WTC11 (cell line): ENCODE measurements at regions of chr9 and their contacts with region 1.

Region 1: GRCh38 chr9:125558453-125559092 is 148.4 kb downstream of the MAPKAP1 start:
- DNase-seq: peak; percentile 64
- ATAC-seq: peak; percentile 83
- H3K4me3 Mint-ChIP-seq: no peak overlapping the region
- H3K27ac Mint-ChIP-seq: no peak overlapping the region
- H3K4me1 Mint-ChIP-seq: peaks cover 14% of the 10 kb centered on the region
- H3K27me3 Mint-ChIP-seq: no peaks in the 10 kb centered on the region
- CTCF ChIP-seq: 0 out of 2 replicates have a peak, but pooled peaks have one; percentile 23

Region 2: DNA sequence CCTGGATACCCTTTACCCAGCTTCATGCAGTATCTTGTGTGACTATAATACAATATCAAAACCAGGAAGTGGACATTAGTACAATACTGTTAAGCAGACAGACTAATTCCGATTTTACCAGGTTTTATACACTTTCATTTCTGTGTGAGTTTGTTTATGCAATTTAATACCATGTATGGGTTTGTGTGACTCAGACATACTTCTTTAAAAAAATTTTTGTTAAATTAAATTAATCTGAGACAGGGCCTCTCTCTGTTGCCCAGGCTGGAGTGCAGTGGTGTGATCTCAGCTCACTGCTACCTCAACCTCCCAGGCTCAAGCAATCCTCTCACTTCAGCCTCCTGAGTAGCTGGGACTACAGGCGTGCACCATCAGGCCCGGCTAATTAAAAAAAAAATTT is 140.2 kb before region 1 on chr9:
- CTCF ChIA-PET with region 1: no interaction called
- POLR2A ChIA-PET with region 1: no interaction called
- DNase-seq: no peak
- ATAC-seq: no peak
- H3K4me3 Mint-ChIP-seq: no peak overlapping the region
- H3K27ac Mint-ChIP-seq: no peak overlapping the region
- H3K4me1 Mint-ChIP-seq: no peaks in the 10 kb centered on the region
- H3K27me3 Mint-ChIP-seq: no peaks in the 10 kb centered on the region
- CTCF ChIP-seq: no peak

Region 3: GRCh38 chr9:125529589-125530515 is 28.7 kb before region 1 on chr9:
- CTCF ChIA-PET with region 1: interaction called, 10 read pairs
- POLR2A ChIA-PET with region 1: no interaction called
- DNase-seq: no peak
- ATAC-seq: peak; percentile 57
- H3K4me3 Mint-ChIP-seq: no peak overlapping the region
- H3K27ac Mint-ChIP-seq: peak overlapping the region; percentile 76
- H3K4me1 Mint-ChIP-seq: peaks cover 47% of the 10 kb centered on the region
- H3K27me3 Mint-ChIP-seq: no peaks in the 10 kb centered on the region
- CTCF ChIP-seq: no peak

Region 4: DNA sequence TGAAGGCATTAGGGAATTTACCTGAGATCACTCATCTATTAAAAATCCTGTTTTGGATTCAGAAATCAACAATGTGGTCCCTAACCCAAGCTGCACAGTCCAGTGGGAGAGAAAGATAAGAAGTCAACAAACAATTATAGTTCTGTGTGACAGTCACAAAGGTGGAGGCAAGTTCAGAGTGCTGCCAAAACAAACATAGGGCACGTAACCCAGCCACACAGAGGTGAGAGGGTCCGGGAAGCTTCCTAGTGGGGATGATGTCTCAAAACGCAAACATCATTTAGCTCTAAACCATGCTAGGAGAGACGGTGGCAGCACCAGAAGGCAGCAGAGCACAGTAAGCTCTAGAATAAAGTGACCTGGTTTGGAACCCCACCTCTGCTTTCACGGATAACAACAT is 10.4 kb before region 1 on chr9:
- CTCF ChIA-PET with region 1: interaction called, 13 read pairs
- POLR2A ChIA-PET with region 1: no interaction called
- DNase-seq: no peak
- ATAC-seq: no peak
- H3K4me3 Mint-ChIP-seq: no peak overlapping the region
- H3K27ac Mint-ChIP-seq: no peak overlapping the region
- H3K4me1 Mint-ChIP-seq: peaks cover 12% of the 10 kb centered on the region; the same call in 1 of the 2 replicates
- H3K27me3 Mint-ChIP-seq: no peaks in the 10 kb centered on the region
- CTCF ChIP-seq: no peak

Region 5: DNA sequence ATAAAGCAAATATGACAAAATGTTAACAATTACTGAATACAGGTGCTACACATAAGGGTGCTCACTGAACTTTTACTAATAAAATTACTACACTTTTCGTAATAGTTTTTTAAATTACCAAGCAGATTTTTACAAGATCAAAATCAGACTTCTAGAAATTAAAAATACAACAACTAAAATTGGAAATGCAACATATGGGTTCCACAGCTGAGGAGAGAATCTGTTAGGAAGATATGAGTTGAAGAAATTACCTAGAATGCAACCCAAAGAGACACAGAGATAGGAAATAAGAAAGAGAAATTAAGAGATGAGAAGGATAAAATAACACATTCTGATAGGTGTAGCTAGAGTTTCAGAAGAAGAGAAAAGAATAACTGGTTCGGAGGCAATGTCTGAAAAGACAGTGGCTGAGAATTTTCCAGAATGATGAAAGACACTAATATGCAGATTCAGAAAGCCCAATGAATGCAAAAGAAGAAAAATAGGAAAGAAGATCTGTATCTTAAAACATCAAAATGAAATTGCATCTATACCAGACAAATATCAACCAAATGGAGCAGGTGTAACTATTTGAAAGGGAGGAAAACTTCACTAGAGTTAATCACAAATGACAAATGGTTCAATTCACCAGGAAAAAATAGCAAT is 52.7 kb after region 1 on chr9:
- CTCF ChIA-PET with region 1: no interaction called
- POLR2A ChIA-PET with region 1: no interaction called
- DNase-seq: no peak
- ATAC-seq: no peak
- H3K4me3 Mint-ChIP-seq: no peak overlapping the region
- H3K27ac Mint-ChIP-seq: no peak overlapping the region
- H3K4me1 Mint-ChIP-seq: peaks cover 43% of the 10 kb centered on the region
- H3K27me3 Mint-ChIP-seq: no peaks in the 10 kb centered on the region
- CTCF ChIP-seq: no peak

Region 6: DNA sequence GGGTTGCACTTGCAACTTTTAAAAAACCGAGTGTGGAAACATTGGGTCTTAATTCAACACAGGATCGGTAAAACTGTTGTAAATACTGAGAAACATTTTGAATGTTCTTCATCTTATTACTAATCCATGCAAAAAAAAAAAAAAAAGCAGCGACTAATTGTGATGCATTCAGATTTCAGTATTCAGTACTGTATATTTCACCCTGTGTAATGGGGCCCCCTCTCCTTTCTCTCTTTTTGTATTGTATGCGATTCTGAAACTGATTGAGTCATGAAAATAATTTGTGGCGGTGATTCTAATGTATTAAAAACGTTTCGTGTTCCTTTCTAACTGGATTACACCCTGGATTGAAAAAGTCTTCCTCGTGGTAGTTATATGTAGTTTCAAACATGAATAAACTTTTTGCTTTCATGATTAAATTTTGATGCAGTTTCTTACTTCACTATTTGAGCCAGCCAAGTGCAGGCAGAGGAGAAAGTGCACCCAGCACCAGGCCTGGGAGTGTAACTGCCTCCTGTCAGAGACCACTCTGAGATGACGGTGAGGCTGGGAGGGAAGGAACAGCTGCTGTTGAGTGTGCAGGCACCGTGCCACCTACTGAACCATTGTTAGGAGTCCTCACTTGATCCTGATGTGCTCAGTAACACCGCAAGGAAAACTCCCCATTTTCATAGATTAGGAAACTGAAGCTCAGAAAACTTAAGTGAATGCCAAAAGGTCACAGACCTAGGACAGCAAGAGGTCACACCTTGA is 408.6 kb after region 1 on chr9:
- CTCF ChIA-PET with region 1: no interaction called
- POLR2A ChIA-PET with region 1: no interaction called
- DNase-seq: no peak
- ATAC-seq: no peak
- H3K4me3 Mint-ChIP-seq: no peak overlapping the region
- H3K27ac Mint-ChIP-seq: peak overlapping the region; percentile 44
- H3K4me1 Mint-ChIP-seq: no peaks in the 10 kb centered on the region
- H3K27me3 Mint-ChIP-seq: no peaks in the 10 kb centered on the region
- CTCF ChIP-seq: no peak